Posterior cingulate gyrus (tissue), 11 donors: ENCODE measurements at regions of chr6 and their contacts with region 1.

Region 1: DNA sequence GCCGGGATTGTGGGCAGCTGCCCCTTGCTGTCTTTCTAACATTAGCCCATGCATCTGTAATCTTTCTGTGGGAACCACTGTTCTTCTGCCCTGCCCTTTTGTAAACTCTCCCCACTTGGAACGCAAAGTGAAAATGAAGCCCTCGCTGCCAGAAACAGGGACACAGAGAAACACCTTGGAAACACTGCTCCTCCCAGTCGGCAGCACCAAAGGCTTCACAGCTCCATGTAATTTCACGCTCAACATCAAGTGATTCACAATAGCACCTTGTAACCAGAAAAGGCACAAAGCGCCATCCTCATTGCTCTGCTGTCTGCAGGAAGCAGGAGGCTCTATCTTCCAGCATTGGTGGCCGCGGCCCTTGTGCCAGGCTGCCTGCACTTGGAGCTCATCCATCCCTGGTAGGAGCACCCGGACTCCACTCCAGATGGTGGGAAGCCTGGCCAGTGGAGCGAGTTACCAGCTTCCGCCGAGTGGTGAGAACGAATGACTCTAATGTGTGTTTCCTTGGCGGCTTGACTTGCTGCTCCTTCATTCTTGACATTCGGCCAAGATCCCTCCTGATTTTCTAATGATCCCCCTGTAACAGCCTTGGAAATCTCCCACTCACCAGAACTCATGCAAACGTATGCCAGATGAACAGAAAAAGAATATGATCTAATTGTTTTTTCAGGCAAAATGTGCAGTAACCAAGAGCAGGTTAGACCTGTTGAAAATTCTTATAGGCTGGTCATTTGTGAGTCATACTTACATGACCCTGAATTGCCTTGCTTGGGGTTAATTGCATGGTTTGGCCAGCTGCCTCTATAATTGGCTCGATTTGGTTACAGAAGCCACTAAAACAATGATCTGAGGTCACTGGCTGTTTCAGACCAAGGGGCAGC is 169.1 kb upstream of the CDYL start:
- DNase-seq: peak; percentile 58 to 95 (median 69)

Region 2: DNA sequence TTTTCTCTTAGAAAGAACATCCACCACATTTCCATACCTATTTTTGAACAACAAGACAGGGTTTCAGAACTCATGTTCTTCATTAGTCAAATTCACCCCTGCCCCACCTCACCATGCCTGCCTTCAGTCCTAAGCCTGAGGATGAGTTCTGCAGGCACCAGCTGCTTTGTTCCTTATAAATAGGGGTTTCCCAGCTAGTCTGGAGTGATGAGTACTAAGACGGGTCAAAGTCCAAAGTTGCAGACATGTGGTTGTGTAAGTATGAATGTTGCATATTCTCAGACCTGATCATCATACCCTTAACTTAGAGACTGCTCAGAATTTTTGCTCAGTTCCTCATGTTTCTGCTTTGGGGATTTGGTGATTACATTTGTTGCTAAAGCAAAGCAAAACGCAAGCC is 88.6 kb before region 1 on chr6:
- intact Hi-C with region 1: no loop called
- DNase-seq: no peak

Region 3: GRCh38 chr6:4647414-4648365 is 40.6 kb after region 1 on chr6:
- intact Hi-C with region 1: loop called (anchors 5 kb)
- DNase-seq: peak; percentile 57 to 95 (median 75)

Region 4: GRCh38 chr6:4775584-4776494 is 168.8 kb after region 1 on chr6 and contains the start of gene CDYL:
- intact Hi-C with region 1: loop called (anchors 5 kb)
- DNase-seq: peak; percentile 69 to 97 (median 75)